ENCODE measurements at regions of chr1 and their contacts with region 1.

Region 1: GRCh38 chr1:41919764-41920397 is 1.2 kb upstream of the HIVEP3 start:
- DNase-seq: peak; percentile 21 to 96 (median 76)

Region 2: GRCh38 chr1:42035830-42036604 is 116.1 kb after region 1 on chr1:
- intact Hi-C with region 1: loop called (anchors 10 kb)
- DNase-seq: peak; percentile 91 to 99 (median 96)

Measured in posterior cingulate gyrus (tissue), 11 donors.